ENCODE measurements at regions of chr2 and their contacts with region 1.

Region 1: DNA sequence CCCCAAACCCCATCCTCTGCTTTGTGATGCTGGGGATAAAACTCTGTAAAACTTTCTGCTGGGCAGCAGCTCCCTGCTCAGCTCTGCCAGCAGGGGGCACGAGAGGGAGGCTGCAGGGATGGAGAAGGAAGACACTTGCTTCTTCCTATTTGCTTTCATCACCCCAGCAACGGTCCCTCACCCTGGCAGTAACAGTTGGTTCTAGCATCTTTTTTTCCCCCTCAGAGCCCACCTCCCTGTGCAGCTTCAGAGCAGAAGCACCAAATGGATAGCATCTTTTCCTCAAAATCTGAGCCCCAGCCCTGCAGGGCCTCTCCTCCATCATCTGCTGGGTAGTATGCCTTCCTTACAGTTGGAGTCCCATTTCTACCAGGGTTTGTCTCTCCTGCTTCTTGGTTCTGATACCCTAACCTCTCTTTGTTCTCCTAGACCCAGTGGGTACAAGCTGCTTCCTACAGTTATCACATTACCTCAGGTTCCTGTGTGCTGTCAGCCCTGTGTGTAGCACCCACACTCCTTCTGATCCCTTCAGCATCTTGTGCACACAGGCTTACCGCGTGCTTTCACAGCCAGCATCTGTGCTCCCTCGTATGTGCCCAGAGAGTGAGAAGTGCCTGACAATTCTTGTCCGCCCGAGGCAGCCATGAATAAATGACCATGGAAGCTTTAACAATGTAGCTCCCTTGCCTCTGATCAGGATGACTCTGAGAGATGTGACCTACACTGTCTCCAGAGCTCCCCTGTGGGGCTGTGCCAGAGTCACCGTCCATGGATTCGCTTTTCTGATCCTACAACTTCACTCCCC is 14.5 kb downstream of the CKAP2L start:
- DNase-seq: peak; percentile 83
- ATAC-seq: peak; percentile 89
- H3K4me3 Mint-ChIP-seq: no peak overlapping the region
- H3K27ac Mint-ChIP-seq: peak overlapping the region; percentile 1
- H3K4me1 Mint-ChIP-seq: peaks cover 14% of the 10 kb centered on the region
- H3K27me3 Mint-ChIP-seq: no peaks in the 10 kb centered on the region
- CTCF ChIP-seq: peak; percentile 97

Region 2: GRCh38 chr2:112665113-112665780 is 84.7 kb before region 1 on chr2:
- CTCF ChIA-PET with region 1: no interaction called
- POLR2A ChIA-PET with region 1: no interaction called
- intact Hi-C with region 1: no loop called
- DNase-seq: no peak
- ATAC-seq: no peak
- H3K4me3 Mint-ChIP-seq: no peak overlapping the region
- H3K27ac Mint-ChIP-seq: no peak overlapping the region
- H3K4me1 Mint-ChIP-seq: peaks cover 7% of the 10 kb centered on the region
- H3K27me3 Mint-ChIP-seq: no peaks in the 10 kb centered on the region
- CTCF ChIP-seq: no peak

Region 3: GRCh38 chr2:112737542-112738232 is 12.3 kb before region 1 on chr2:
- CTCF ChIA-PET with region 1: interaction called, 56 read pairs
- POLR2A ChIA-PET with region 1: no interaction called
- intact Hi-C with region 1: no loop called
- DNase-seq: no peak
- ATAC-seq: no peak
- H3K4me3 Mint-ChIP-seq: no peak overlapping the region
- H3K27ac Mint-ChIP-seq: no peak overlapping the region
- H3K4me1 Mint-ChIP-seq: no peaks in the 10 kb centered on the region
- H3K27me3 Mint-ChIP-seq: no peaks in the 10 kb centered on the region
- CTCF ChIP-seq: no peak

Region 4: DNA sequence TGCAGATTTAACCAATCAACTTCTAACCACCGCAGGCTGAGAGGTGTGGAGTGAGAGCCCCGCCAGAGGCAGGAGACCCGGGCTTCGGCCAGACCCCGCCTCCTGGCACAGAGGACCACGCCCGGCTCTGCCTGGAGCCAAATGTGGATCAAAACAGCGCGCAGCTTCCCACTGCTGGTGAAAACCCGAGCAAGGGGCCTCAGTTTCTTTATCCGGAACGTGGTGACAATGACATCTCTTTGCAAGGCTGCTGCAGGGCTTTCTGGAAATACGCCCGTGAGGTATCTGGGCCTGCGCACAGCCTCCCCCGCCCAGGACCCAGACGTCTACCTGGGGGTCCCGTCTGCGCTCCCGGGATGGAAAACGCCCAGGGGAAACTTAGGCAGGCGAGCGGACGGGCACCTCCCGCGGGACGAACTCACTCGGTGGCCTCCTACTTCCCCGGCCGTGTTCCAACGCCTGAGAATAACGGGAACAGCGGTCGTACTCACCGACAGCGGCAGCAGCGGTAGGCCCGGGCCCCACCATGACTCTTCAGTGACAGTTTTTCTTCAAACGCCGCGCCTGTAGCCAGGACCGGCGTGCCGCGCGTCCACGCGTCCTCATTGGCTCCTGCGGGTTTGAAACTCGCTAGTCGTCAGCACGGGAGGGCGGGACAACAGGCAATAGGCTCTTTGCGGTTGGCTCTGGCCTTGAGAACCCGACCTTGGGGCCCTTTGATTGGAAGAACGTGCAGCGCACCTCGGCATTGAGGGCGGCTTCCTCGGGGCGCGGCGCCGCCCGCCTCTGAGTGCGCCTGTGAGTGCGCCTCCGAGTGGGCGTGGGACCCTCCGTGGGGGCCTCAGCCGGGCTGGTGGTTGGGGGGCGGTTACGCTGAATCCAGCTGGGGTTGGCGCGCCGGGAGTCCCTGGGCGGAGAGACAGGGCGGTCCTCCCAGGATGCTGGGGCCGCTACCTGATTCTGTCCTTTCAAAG is 14.4 kb after region 1 on chr2 and contains the start of gene CKAP2L:
- CTCF ChIA-PET with region 1: interaction called, 12 read pairs
- POLR2A ChIA-PET with region 1: interaction called, 9 read pairs
- intact Hi-C with region 1: no loop called
- DNase-seq: peak; percentile 99
- ATAC-seq: peak; percentile 98
- H3K4me3 Mint-ChIP-seq: peak within 1 kb of the TSS; percentile 97
- H3K27ac Mint-ChIP-seq: peak within 1 kb of the TSS; percentile 95
- H3K4me1 Mint-ChIP-seq: peaks cover 19% of the 10 kb centered on the region
- H3K27me3 Mint-ChIP-seq: no peaks in the 10 kb centered on the region
- CTCF ChIP-seq: no peak
- total RNA-seq, gene CKAP2L: 24.5 to 30.5 TPM

Region 5: GRCh38 chr2:112920923-112921532 is 171.1 kb after region 1 on chr2:
- CTCF ChIA-PET with region 1: interaction called, 24 read pairs
- POLR2A ChIA-PET with region 1: no interaction called
- intact Hi-C with region 1: no loop called
- DNase-seq: peak; percentile 38
- ATAC-seq: peak; percentile 63
- H3K4me3 Mint-ChIP-seq: no peak overlapping the region
- H3K27ac Mint-ChIP-seq: peak overlapping the region; percentile 63
- H3K4me1 Mint-ChIP-seq: peaks cover 23% of the 10 kb centered on the region
- H3K27me3 Mint-ChIP-seq: no peaks in the 10 kb centered on the region
- CTCF ChIP-seq: no peak

Region 6: DNA sequence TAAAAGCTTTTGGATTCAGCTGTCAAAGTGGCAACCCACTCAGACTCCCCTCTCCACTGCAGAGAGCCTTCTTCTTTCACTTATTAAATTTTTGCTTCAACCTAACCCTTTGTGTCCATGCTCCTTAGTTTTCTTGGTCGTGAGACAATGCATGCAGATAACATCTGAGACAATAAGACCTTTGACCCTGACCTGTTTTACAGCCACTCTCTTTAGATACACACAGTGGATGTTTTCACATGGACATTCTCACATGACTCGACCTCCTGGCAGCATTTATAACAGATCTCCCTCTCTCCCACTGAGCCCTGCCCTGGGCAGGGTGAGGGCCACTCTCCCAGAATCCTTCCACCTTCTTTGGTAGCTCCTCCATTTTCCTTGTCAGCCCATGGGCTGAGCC is 197.4 kb after region 1 on chr2:
- CTCF ChIA-PET with region 1: interaction called, 159 read pairs
- POLR2A ChIA-PET with region 1: no interaction called
- intact Hi-C with region 1: loop called (anchors 5 kb)
- DNase-seq: no peak
- ATAC-seq: no peak
- H3K4me3 Mint-ChIP-seq: no peak overlapping the region
- H3K27ac Mint-ChIP-seq: no peak overlapping the region
- H3K4me1 Mint-ChIP-seq: no peaks in the 10 kb centered on the region
- H3K27me3 Mint-ChIP-seq: peaks cover 2% of the 10 kb centered on the region
- CTCF ChIP-seq: no peak

Region 7: DNA sequence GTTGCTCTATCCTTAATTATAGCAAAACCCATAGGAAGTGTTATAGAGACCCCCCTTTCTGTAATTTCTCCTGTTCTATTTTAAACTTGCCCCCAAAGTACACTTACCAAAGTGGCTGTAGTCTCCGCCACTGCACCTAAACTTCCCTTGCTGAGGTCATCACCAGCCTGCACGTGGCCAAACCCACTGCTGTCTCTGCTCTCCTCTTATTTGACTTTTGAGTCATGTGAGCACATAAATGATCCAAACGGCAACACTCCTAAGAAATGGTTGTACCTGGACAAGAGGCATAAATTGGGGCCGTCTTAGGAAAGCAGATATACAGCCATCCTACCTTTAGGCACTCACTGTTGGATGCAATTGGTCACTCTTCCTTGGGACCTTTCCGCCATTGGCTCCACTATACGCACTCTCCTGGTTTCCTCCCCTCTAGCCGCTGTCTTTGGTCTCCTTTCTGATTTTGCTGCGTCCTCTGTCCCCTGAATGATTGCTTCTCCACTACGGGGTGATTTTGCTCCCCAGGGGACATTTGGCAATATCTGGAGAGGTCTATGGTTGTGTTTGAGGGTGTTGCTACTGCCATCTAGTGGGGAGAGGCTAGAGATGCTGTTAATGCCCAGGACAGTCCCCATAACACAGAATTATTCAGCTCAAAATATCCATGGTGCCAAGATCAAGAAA is 208.6 kb after region 1 on chr2:
- CTCF ChIA-PET with region 1: interaction called, 21 read pairs
- POLR2A ChIA-PET with region 1: interaction called, 4 read pairs
- intact Hi-C with region 1: no loop called
- DNase-seq: peak; percentile 45
- ATAC-seq: peak; percentile 91
- H3K4me3 Mint-ChIP-seq: no peak overlapping the region
- H3K27ac Mint-ChIP-seq: no peak overlapping the region
- H3K4me1 Mint-ChIP-seq: no peaks in the 10 kb centered on the region
- H3K27me3 Mint-ChIP-seq: no peaks in the 10 kb centered on the region
- CTCF ChIP-seq: peak; percentile 88

Measured in activated CD8-positive, alpha-beta T cell treated with anti-CD3 and anti-CD28 coated beads for 36 hours (primary cell).